ENCODE measurements at regions of chr19 and their contacts with region 1.

Region 1: DNA sequence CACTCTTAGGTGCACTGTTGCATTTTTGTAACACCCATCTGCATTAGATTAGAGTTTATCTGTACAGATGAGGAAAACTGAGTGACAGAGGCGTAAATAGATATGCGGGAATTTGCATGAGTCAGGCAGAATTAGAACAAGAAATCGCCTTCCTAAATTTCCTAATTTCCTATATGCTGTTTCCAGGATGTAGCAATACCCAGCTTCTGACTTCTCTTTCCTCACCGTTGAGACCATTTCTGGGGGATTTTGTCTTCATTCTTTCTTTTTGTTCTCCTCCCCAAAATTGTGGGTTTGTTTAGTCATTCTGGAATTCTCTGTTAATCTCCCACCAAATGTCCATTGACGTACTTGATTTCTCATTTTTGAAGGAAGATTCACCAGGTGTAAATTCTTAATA is 10.6 kb upstream of the ZNF792 start:
- DNase-seq: no peak
- ATAC-seq: no peak
- H3K4me3 Mint-ChIP-seq: no peak overlapping the region
- H3K27ac Mint-ChIP-seq: no peak overlapping the region
- H3K4me1 Mint-ChIP-seq: peaks cover 22% of the 10 kb centered on the region
- H3K27me3 Mint-ChIP-seq: no peaks in the 10 kb centered on the region

Region 2: DNA sequence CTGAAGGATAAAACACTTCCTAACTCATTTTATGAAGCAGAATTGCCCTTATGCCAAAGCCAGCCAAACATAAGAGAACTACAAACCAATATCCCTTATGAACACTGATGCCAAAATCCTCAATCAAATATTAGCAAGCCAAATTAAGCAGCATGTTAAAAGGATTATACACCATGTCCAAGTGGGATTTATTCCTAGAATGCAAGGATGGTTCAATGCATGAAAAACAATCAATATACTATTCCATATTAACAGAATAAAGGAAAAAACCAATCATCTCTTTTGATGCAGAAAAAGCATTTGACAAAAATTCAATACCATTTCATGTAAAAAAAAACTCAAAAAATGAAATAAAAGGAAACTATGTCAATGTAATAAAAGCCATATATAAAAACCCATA is 21.6 kb before region 1 on chr19:
- CTCF ChIA-PET with region 1: no interaction called
- POLR2A ChIA-PET with region 1: no interaction called
- DNase-seq: no peak
- ATAC-seq: no peak
- H3K4me3 Mint-ChIP-seq: no peak overlapping the region
- H3K27ac Mint-ChIP-seq: no peak overlapping the region
- H3K4me1 Mint-ChIP-seq: no peaks in the 10 kb centered on the region
- H3K27me3 Mint-ChIP-seq: no peaks in the 10 kb centered on the region

Region 3: DNA sequence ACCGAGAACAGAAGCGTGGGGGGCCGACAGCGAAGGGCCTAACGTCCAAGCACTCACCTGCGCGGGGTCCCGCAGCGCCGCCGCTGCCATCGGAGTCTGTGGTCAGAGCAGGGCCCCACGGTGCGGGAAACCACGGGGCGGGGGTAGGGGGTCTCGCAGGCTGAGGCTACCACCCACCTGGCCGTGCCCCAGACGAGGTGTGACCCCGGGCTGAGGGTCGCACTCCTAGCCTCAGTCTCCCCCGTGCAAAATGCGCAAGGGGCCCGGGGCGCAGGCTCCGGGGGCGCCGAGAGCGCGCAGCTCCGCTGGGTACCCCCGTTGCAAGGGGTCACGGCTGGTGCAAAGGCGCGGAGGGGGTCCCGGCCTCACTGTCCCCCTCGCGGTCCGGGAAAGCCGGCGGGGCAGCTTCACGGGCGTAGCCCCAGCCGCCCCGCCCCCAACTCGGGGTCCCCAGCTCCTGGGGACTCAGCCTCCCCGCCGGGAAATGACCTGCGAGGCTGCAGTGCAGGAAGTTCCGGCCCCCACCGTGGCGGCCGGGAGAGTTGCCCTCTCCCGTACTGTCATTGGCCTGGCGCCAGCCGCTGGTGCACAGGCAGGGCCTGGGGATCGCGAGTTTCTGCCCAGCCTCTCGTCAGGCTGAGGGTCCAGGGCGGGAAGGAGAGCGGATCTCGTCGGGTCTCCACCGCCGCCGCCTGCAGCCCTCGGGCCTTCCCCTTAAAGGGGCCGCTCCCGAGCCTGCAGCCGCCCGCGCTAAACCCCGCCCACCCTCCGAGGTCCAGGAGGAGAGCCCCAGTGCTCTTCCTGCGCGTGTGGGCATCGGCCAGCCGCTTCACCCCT is 10.9 kb before region 1 on chr19 and contains the start of gene ZNF792:
- CTCF ChIA-PET with region 1: interaction called, 15 read pairs
- POLR2A ChIA-PET with region 1: no interaction called
- DNase-seq: peak; percentile 58
- ATAC-seq: peak; percentile 70
- H3K4me3 Mint-ChIP-seq: peak within 1 kb of the TSS; percentile 92
- H3K27ac Mint-ChIP-seq: peak within 1 kb of the TSS; percentile 86
- H3K4me1 Mint-ChIP-seq: peaks cover 38% of the 10 kb centered on the region
- H3K27me3 Mint-ChIP-seq: no peaks in the 10 kb centered on the region
- total RNA-seq, gene ZNF792: 13.7 to 14.2 TPM

Region 4: GRCh38 chr19:34985249-34986022 is 10.8 kb after region 1 on chr19:
- CTCF ChIA-PET with region 1: interaction called, 24 read pairs
- POLR2A ChIA-PET with region 1: interaction called, 4 read pairs
- DNase-seq: peak; percentile 58
- ATAC-seq: peak; percentile 88
- H3K4me3 Mint-ChIP-seq: peak overlapping the region; percentile 46
- H3K27ac Mint-ChIP-seq: peak overlapping the region; percentile 75
- H3K4me1 Mint-ChIP-seq: peaks cover 10% of the 10 kb centered on the region
- H3K27me3 Mint-ChIP-seq: no peaks in the 10 kb centered on the region

Region 5: GRCh38 chr19:34990578-34991192 is 16.0 kb after region 1 on chr19:
- CTCF ChIA-PET with region 1: interaction called, 24 read pairs
- POLR2A ChIA-PET with region 1: interaction called, 4 read pairs
- DNase-seq: no peak
- ATAC-seq: no peak
- H3K4me3 Mint-ChIP-seq: no peak overlapping the region
- H3K27ac Mint-ChIP-seq: no peak overlapping the region
- H3K4me1 Mint-ChIP-seq: peaks cover 10% of the 10 kb centered on the region
- H3K27me3 Mint-ChIP-seq: no peaks in the 10 kb centered on the region

Region 6: GRCh38 chr19:34999498-35000341 is 25.1 kb after region 1 on chr19 and contains the start of gene GRAMD1A:
- CTCF ChIA-PET with region 1: interaction called, 126 read pairs
- POLR2A ChIA-PET with region 1: interaction called, 6 read pairs
- DNase-seq: peak; percentile 78
- ATAC-seq: peak; percentile 51
- H3K4me3 Mint-ChIP-seq: peak within 1 kb of the TSS; percentile 87
- H3K27ac Mint-ChIP-seq: peak within 1 kb of the TSS; percentile 95
- H3K4me1 Mint-ChIP-seq: peaks cover 64% of the 10 kb centered on the region
- H3K27me3 Mint-ChIP-seq: no peaks in the 10 kb centered on the region
- total RNA-seq, gene GRAMD1A: 76.2 to 81.8 TPM

Region 7: DNA sequence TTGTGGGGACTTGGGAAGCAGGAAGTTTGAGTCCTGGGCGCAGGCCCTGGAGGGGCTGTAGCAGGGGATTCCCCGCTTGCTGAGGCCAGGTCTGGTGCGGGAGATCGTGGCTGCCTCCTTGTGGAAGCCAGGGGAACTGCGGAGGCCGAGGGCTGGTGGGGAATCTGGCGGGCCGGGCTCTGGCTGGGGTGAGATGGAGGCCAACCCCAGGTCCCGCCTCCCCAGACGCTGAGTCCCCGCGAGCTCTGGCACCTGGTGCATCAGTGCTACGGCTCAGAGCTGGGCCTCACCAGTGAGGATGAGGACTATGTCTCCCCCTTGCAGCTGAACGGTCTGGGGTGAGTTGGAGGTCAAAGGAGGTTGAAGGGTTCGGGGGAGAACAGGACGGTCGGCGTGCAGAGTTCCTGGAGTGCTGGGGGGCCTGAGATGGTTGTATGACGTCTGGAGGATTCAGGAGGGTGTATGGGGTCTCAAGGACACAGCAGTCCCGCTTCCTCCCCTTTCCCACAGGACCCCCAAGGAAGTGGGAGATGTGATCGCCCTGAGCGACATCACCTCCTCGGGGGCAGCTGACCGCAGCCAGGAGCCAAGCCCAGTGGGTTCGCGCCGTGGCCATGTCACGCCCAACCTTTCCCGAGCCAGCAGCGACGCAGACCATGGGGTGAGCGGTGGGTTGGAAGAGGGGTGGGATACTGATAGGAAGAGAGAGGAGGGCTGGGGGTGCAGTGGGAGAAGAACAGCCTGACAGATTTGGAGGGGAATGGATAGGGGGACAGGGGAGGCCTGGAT is 38.6 kb after region 1 on chr19:
- CTCF ChIA-PET with region 1: interaction called, 126 read pairs
- POLR2A ChIA-PET with region 1: interaction called, 4 read pairs
- DNase-seq: peak; percentile 82
- ATAC-seq: peak; percentile 67
- H3K4me3 Mint-ChIP-seq: peak overlapping the region; percentile 56
- H3K27ac Mint-ChIP-seq: peak overlapping the region; percentile 83
- H3K4me1 Mint-ChIP-seq: peaks cover 65% of the 10 kb centered on the region
- H3K27me3 Mint-ChIP-seq: no peaks in the 10 kb centered on the region

Region 8: DNA sequence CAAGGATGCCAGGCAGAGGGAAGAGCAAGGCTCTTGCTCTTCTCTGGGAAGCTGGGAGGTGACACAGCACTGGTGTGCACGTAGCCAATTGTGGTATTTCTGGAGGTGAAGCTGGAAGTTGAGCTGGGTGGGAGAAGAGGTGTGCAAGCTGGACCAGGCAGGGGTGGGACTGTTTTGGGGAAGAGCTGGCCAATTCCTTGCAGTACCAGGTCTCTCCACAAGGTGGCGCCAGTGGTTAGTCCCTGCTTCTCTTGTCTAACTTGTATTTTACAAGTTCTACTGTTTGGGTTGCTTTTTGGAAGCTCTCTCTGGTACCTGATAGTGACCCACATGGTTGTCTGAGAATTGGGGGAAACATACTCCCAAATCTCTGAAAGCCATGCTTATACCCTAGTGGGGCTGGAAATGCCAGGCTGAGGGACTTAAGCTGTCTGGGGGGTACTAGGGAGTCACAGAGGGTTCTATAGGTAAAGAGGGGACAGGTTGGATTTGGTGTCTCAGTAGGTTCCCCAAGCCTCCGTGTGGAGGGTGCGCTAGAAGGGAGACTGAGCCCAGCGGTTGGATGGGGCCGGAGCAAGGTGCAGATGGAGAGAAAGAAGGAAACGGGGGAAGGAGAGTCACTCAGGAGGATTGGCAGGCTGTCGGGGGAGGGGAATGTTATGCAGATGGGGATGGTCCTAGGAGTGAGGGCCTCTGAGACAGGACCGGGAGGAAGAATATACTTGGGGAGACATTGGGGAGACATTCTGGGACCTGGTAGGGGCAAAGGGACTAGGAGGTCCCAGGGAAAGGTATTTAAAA is 69.9 kb after region 1 on chr19:
- CTCF ChIA-PET with region 1: interaction called, 10 read pairs
- POLR2A ChIA-PET with region 1: no interaction called
- DNase-seq: peak; percentile 71
- ATAC-seq: no peak
- H3K4me3 Mint-ChIP-seq: no peak overlapping the region
- H3K27ac Mint-ChIP-seq: no peak overlapping the region
- H3K4me1 Mint-ChIP-seq: peaks cover 27% of the 10 kb centered on the region
- H3K27me3 Mint-ChIP-seq: peaks cover 10% of the 10 kb centered on the region

Measured in activated CD8-positive, alpha-beta T cell treated with anti-CD3 and anti-CD28 coated beads, Interleukin-2, amount 10 ng/mL, durations not matched to agents 7 days and 5 days (primary cell).